Activated CD4-positive, alpha-beta memory T cell treated with anti-CD3 and anti-CD28 coated beads for 36 hours (primary cell): ENCODE measurements at regions of chr3 and their contacts with region 1.

Region 1: GRCh38 chr3:192816351-192816750 is 89.0 kb upstream of the FGF12 start:
- DNase-seq: no peak
- H3K4me3 Mint-ChIP-seq: no peak overlapping the region
- H3K27ac Mint-ChIP-seq: no peak overlapping the region
- H3K4me1 Mint-ChIP-seq: peaks cover 45% of the 10 kb centered on the region
- H3K27me3 Mint-ChIP-seq: no peaks in the 10 kb centered on the region

Region 2: DNA sequence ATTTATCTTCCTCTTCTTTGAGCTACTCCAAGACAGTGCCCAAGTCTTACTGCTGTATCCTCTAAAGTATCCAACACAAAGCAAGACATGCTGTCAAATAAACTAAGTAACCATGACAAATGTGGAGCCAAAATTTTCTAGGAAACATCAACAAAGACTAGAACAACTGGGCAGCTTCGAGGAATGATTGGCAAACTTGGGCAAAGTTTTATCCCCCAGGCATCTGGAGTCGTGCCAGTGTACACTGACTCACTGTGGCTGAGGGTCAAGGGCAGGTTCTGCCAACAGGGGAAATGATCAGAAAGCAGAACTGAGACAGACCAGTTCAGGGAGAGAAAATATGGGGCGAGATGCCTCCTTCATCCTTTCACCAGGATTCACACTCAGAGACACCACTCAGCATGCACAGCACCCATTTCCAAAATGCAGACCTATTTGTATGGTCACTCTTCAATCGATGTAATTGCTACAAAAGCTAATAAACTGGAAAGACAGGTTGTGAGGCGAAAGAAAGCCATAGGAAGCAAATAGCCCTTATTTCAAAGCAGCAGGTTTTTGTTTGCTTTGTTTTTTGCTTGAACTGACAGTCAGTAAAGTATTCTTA is 35.6 kb after region 1 on chr3:
- CTCF ChIA-PET with region 1: interaction called, 11 read pairs
- POLR2A ChIA-PET with region 1: interaction called, 8 read pairs
- intact Hi-C with region 1: loop called (anchors 1 kb)
- DNase-seq: no peak
- H3K4me3 Mint-ChIP-seq: no peak overlapping the region
- H3K27ac Mint-ChIP-seq: no peak overlapping the region
- H3K4me1 Mint-ChIP-seq: peaks cover 57% of the 10 kb centered on the region
- H3K27me3 Mint-ChIP-seq: no peaks in the 10 kb centered on the region

Region 3: GRCh38 chr3:192892981-192893700 is 76.8 kb after region 1 on chr3:
- CTCF ChIA-PET with region 1: interaction called, 8 read pairs
- POLR2A ChIA-PET with region 1: interaction called, 12 read pairs
- intact Hi-C with region 1: loop called (anchors 1 kb)
- DNase-seq: peak; percentile 86
- H3K4me3 Mint-ChIP-seq: peak overlapping the region; percentile 24
- H3K27ac Mint-ChIP-seq: peak overlapping the region; percentile 80
- H3K4me1 Mint-ChIP-seq: peaks cover 82% of the 10 kb centered on the region
- H3K27me3 Mint-ChIP-seq: peaks cover 12% of the 10 kb centered on the region

Region 4: DNA sequence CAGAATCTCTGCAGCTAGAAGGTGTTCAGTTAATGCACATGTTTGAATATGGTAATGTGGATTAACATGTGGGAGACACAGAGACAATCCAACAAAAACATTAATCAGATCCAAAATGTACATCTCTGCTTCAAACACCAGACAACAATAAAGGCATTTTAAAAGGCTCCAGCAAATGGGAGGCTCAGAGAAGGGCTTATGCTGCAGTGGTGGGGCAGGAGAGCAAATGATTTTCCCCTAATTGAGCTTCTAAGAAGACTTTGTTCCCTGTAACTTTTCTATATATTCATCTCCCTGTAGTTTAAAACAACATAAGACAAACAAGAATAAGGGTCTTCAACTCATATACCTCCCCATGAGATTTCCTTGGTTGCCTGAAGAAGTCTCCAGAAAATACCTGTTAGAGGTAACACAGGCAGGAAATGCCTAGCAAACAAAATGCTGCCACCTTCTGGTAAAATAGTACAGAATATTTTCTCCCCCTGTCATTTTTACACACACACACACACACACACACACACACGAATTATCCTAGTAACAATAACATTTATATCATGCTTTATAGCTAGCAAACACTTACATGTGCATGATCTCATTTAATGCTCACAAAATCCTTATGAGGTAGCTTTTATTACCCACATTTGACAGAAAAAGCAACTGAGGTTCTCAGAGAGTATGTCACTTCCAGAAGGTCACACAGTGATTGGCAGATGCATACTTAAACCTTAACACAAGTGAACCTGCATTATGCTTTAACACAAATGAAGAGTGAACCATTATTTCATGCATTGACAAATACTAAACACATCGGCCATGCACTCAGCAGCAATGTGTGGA is 224.7 kb after region 1 on chr3:
- CTCF ChIA-PET with region 1: interaction called, 203 read pairs
- POLR2A ChIA-PET with region 1: no interaction called
- intact Hi-C with region 1: loop called (anchors 1 kb)
- DNase-seq: no peak
- H3K4me3 Mint-ChIP-seq: no peak overlapping the region
- H3K27ac Mint-ChIP-seq: no peak overlapping the region
- H3K4me1 Mint-ChIP-seq: no peaks in the 10 kb centered on the region
- H3K27me3 Mint-ChIP-seq: no peaks in the 10 kb centered on the region

Region 5: GRCh38 chr3:193554811-193555210 is 738.5 kb after region 1 on chr3 and contains the start of gene ATP13A4:
- CTCF ChIA-PET with region 1: no interaction called
- POLR2A ChIA-PET with region 1: no interaction called
- intact Hi-C with region 1: no loop called
- DNase-seq: no peak
- H3K4me3 Mint-ChIP-seq: no peak within 1 kb of the TSS
- H3K27ac Mint-ChIP-seq: no peak within 1 kb of the TSS
- H3K4me1 Mint-ChIP-seq: no peaks in the 10 kb centered on the region
- H3K27me3 Mint-ChIP-seq: no peaks in the 10 kb centered on the region
- total RNA-seq, gene ATP13A4: 2.7 to 3.2 TPM